Dendritic cell treated with granulocyte-macrophage colony-stimulating factor and Interleukin-4, amounts not matched to agents 40 ng/mL and 50 ng/mL, for 4 days (primary cell): ENCODE measurements at regions of chr1 and their contacts with region 1.

Region 1: GRCh38 chr1:43847290-43847689 is 86.3 kb upstream of the ARTN start:
- H3K4me3 Mint-ChIP-seq: no peak overlapping the region
- H3K27ac Mint-ChIP-seq: no peak overlapping the region
- H3K4me1 Mint-ChIP-seq: peaks cover 18% of the 10 kb centered on the region
- H3K27me3 Mint-ChIP-seq: peaks cover 7% of the 10 kb centered on the region

Region 2: DNA sequence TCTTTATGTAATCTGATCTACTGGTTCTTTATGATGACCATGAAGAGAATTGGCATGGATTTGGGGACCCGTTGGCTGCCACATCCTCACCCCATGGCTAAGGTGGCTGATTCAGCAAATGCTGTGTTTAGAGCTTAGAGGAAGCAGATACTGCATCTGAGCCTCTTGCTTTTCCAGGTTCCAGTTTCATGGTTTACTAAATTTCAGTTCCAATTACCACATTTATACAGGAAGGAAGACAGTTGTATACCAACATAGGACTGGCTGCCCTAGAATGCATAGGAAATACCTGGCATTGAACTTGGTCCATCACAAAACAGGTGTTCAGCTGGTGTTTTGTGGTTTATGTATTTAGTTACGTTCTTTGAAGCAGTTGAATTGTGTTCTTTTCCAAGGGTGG is 32.9 kb before region 1 on chr1:
- intact Hi-C with region 1: loop called (anchors 5 kb)
- H3K4me3 Mint-ChIP-seq: no peak overlapping the region
- H3K27ac Mint-ChIP-seq: no peak overlapping the region
- H3K4me1 Mint-ChIP-seq: peaks cover 60% of the 10 kb centered on the region
- H3K27me3 Mint-ChIP-seq: no peaks in the 10 kb centered on the region

Region 3: GRCh38 chr1:44305962-44306422 is 458.7 kb after region 1 on chr1:
- intact Hi-C with region 1: no loop called
- H3K4me3 Mint-ChIP-seq: no peak overlapping the region
- H3K27ac Mint-ChIP-seq: no peak overlapping the region
- H3K4me1 Mint-ChIP-seq: peaks cover 11% of the 10 kb centered on the region
- H3K27me3 Mint-ChIP-seq: no peaks in the 10 kb centered on the region